CD8-positive, alpha-beta T cell (primary cell): ENCODE measurements at regions of chr5 and their contacts with region 1.

Region 1: GRCh38 chr5:170338933-170339779 is 41.6 kb upstream of the LCP2 start:
- DNase-seq: peak; percentile 39 to 88 (median 69)
- ATAC-seq: peak; percentile 65
- H3K4me3 ChIP-seq: no peak overlapping the region
- H3K4me3 Mint-ChIP-seq: no peak overlapping the region
- H3K27ac ChIP-seq: no peak overlapping the region
- H3K27ac Mint-ChIP-seq: peak overlapping the region; percentile 85
- H3K4me1 ChIP-seq: peaks cover 49% of the 10 kb centered on the region
- H3K4me1 Mint-ChIP-seq: peaks cover 39% of the 10 kb centered on the region
- H3K27me3 ChIP-seq: no peaks in the 10 kb centered on the region
- H3K27me3 Mint-ChIP-seq: no peaks in the 10 kb centered on the region
- CTCF ChIP-seq: peak; percentile 68

Region 2: GRCh38 chr5:169583424-169584204 is 755.5 kb before region 1 on chr5 and contains the start of gene SPDL1:
- CTCF ChIA-PET with region 1: no interaction called
- POLR2A ChIA-PET with region 1: no interaction called
- intact Hi-C with region 1: loop called (anchors 5 to 10 kb)
- DNase-seq: peak; percentile 87 to 97 (median 93)
- ATAC-seq: peak; percentile 93
- H3K4me3 ChIP-seq: peak within 1 kb of the TSS; percentile 76 to 89
- H3K4me3 Mint-ChIP-seq: peak within 1 kb of the TSS; percentile 99
- H3K27ac ChIP-seq: peak within 1 kb of the TSS; percentile 65 to 74
- H3K27ac Mint-ChIP-seq: peak within 1 kb of the TSS; percentile 94
- H3K4me1 ChIP-seq: peaks cover 5% of the 10 kb centered on the region
- H3K4me1 Mint-ChIP-seq: peaks cover 21% of the 10 kb centered on the region
- H3K27me3 ChIP-seq: no peaks in the 10 kb centered on the region
- H3K27me3 Mint-ChIP-seq: no peaks in the 10 kb centered on the region
- CTCF ChIP-seq: no peak
- total RNA-seq, gene SPDL1: 5.2 to 6.9 TPM

Region 3: DNA sequence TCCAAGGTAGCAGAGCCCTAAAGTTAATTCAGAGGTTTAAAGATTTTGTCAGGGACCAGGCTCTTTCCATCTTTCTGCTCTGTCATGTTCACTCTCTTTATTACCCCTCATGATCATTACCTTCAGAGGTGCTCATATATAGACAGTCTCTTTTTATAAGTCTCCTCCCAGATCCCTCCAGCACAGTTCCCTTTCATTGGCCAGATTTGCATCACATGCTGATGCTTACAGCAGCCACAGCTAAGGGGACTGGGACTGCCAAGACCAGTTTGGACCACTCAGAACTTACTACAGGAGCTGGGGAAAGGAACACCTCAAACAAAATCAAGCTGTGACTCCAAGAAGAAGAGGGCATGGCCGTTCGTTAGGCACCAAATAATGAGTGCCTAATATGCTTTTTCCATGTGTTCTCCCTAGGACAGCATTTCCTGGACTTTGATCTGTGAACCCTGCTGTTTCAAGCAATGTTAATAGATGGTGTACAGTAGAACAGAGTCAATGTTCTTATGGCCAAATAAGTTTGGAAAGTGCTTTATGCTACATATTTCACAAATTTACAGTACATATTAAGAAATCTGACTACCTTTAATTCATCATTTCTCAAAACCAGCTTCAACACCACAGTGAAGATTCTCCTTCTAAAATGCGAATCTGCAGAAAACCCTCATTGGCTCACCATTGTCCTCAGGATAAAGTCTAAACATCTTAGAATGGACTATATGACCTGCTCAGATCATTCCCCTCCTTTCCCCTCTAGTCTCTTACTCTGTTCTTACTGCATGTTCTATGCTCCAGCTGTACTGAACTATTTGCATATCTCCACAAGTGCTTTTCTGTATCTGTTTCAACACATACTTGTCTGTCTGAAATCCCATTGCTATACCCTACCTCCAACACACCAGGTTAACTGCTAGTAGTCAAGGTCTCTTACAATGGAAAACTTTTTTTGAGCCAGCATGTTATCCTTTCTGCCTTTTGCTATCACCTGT is 103.0 kb before region 1 on chr5:
- CTCF ChIA-PET with region 1: interaction called, 34 read pairs
- POLR2A ChIA-PET with region 1: no interaction called
- intact Hi-C with region 1: no loop called
- DNase-seq: no peak
- ATAC-seq: no peak
- H3K4me3 ChIP-seq: no peak overlapping the region
- H3K4me3 Mint-ChIP-seq: no peak overlapping the region
- H3K27ac ChIP-seq: no peak overlapping the region
- H3K27ac Mint-ChIP-seq: peak overlapping the region; percentile 76
- H3K4me1 ChIP-seq: no peaks in the 10 kb centered on the region
- H3K4me1 Mint-ChIP-seq: peaks cover 14% of the 10 kb centered on the region
- H3K27me3 ChIP-seq: no peaks in the 10 kb centered on the region
- H3K27me3 Mint-ChIP-seq: no peaks in the 10 kb centered on the region
- CTCF ChIP-seq: no peak

Region 4: DNA sequence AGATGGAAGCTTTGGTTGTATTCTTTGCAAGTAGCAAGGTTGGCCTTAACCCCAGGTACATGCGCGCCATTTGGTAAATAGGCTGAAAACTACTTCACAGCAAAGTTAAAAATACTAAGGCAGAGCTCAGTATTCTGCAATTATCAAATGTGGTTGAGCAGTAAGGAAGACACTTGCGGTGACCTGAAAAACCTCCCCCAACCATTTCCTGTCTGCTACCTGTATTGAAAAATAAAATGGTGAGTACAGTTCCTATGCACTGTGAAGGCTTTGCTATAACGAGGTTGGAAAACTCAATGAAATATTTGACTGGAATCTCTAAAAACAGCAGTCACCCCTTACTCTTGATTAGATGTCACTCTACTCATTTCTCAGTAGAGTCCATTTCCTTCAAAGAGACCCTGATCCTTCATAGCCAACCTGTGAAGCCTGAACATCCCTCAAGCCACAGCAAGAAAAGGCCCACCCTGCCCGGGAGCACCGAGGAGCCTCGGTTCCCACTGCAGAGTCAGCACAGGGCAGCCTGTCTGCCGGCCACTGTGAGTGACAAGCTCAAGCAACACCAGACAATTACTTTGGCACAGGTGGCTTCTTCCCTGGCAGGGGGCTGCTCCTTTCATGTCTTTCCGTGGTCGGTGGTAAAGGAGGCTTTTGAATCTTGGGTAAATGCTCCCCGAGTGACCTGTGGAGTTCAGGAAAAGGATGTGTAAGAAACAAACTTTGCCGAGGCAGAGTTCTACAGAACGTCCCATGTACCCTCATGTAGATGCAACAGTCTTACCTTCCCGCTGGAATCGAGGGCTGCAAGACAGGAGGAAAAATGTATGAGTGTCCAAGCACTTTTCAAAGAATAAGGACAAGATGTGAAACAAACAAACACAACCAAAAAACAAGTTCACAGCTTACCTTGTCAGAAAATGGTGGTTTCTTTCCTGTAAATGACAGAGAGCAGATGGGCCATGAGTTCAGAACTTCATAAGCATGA is 76.8 kb before region 1 on chr5:
- CTCF ChIA-PET with region 1: interaction called, 342 read pairs
- POLR2A ChIA-PET with region 1: interaction called, 16 read pairs
- intact Hi-C with region 1: loop called in 1 of 2 experiments (anchors 1 kb)
- DNase-seq: peak in 6 of 9 experiments; percentile 43 to 87 (median 67)
- ATAC-seq: peak; percentile 77
- H3K4me3 ChIP-seq: peak overlapping the region in 1 of 2 experiments; percentile 11
- H3K4me3 Mint-ChIP-seq: peak overlapping the region; percentile 74
- H3K27ac ChIP-seq: peak overlapping the region; percentile 45 to 62
- H3K27ac Mint-ChIP-seq: peak overlapping the region; percentile 98
- H3K4me1 ChIP-seq: peaks cover 81% of the 10 kb centered on the region
- H3K4me1 Mint-ChIP-seq: peaks cover 96% of the 10 kb centered on the region
- H3K27me3 ChIP-seq: no peaks in the 10 kb centered on the region
- H3K27me3 Mint-ChIP-seq: no peaks in the 10 kb centered on the region
- CTCF ChIP-seq: no peak

Region 5: GRCh38 chr5:170287532-170287931 is 51.6 kb before region 1 on chr5:
- CTCF ChIA-PET with region 1: interaction called, 192 read pairs
- POLR2A ChIA-PET with region 1: interaction called, 112 read pairs
- intact Hi-C with region 1: no loop called
- DNase-seq: peak in 1 of 9 experiments; percentile 48
- ATAC-seq: peak; percentile 3
- H3K4me3 ChIP-seq: no peak overlapping the region
- H3K4me3 Mint-ChIP-seq: peak overlapping the region; percentile 68
- H3K27ac ChIP-seq: peak overlapping the region in 1 of 2 experiments; percentile 86
- H3K27ac Mint-ChIP-seq: peak overlapping the region; percentile 97
- H3K4me1 ChIP-seq: peaks cover 99% of the 10 kb centered on the region
- H3K4me1 Mint-ChIP-seq: peaks cover 100% of the 10 kb centered on the region
- H3K27me3 ChIP-seq: no peaks in the 10 kb centered on the region
- H3K27me3 Mint-ChIP-seq: no peaks in the 10 kb centered on the region
- CTCF ChIP-seq: no peak

Region 6: GRCh38 chr5:170327168-170327567 is 12.0 kb before region 1 on chr5:
- CTCF ChIA-PET with region 1: interaction called, 25 read pairs
- POLR2A ChIA-PET with region 1: interaction called, 3 read pairs
- intact Hi-C with region 1: no loop called
- DNase-seq: peak in 1 of 9 experiments; percentile 35
- ATAC-seq: no peak
- H3K4me3 ChIP-seq: no peak overlapping the region
- H3K4me3 Mint-ChIP-seq: no peak overlapping the region
- H3K27ac ChIP-seq: peak overlapping the region in 1 of 2 experiments; percentile 36
- H3K27ac Mint-ChIP-seq: no peak overlapping the region
- H3K4me1 ChIP-seq: peaks cover 52% of the 10 kb centered on the region
- H3K4me1 Mint-ChIP-seq: peaks cover 12% of the 10 kb centered on the region
- H3K27me3 ChIP-seq: no peaks in the 10 kb centered on the region
- H3K27me3 Mint-ChIP-seq: no peaks in the 10 kb centered on the region
- CTCF ChIP-seq: no peak

Region 7: GRCh38 chr5:170444969-170445505 is 105.9 kb after region 1 on chr5:
- CTCF ChIA-PET with region 1: no interaction called
- POLR2A ChIA-PET with region 1: no interaction called
- intact Hi-C with region 1: no loop called
- DNase-seq: peak in 1 of 9 experiments; percentile 27
- ATAC-seq: no peak
- H3K4me3 ChIP-seq: no peak overlapping the region
- H3K4me3 Mint-ChIP-seq: no peak overlapping the region
- H3K27ac ChIP-seq: no peak overlapping the region
- H3K27ac Mint-ChIP-seq: no peak overlapping the region
- H3K4me1 ChIP-seq: no peaks in the 10 kb centered on the region
- H3K4me1 Mint-ChIP-seq: peaks cover 3% of the 10 kb centered on the region
- H3K27me3 ChIP-seq: no peaks in the 10 kb centered on the region
- H3K27me3 Mint-ChIP-seq: no peaks in the 10 kb centered on the region
- CTCF ChIP-seq: no peak

Region 8: DNA sequence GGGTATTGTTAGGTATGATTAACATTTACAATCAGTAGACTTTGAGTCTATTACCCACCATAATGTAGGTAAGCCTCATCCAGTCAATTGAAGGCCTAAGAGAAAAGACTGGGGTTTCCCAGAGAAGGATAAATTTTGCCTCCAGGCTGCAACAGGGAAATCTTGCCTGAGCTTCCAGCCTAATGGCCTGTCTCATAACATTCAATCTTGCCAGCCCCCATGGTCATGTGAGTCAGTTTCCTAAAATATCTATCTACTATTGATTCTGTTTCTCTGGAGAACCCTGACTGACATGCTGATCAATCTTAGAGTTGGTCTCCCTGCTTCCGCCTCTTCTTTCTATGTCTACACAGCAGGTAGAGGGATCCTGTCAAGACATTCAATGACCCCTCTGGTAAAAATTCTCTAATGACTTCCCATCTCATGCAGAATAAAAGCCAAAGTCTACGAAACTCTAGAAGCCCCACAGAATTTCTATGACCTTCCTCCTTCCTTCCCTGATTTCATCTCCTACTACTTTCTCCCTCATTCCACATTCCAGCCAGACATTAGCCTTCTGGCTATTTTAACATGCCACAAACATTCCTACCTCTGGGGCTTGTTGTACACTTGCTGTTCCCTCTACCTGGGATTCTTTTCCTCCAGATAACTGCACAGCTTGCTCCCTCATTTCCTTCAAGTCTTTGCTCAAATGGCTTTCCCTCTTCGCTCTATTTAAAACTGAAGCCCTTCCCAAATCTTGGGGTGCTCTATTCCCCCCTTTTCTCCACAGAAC is 1607.0 kb after region 1 on chr5:
- CTCF ChIA-PET with region 1: no interaction called
- POLR2A ChIA-PET with region 1: no interaction called
- intact Hi-C with region 1: no loop called
- DNase-seq: no peak
- ATAC-seq: no peak
- H3K4me3 ChIP-seq: no peak overlapping the region
- H3K4me3 Mint-ChIP-seq: no peak overlapping the region
- H3K27ac ChIP-seq: no peak overlapping the region
- H3K27ac Mint-ChIP-seq: peak overlapping the region; percentile 9
- H3K4me1 ChIP-seq: no peaks in the 10 kb centered on the region
- H3K4me1 Mint-ChIP-seq: peaks cover 52% of the 10 kb centered on the region
- H3K27me3 ChIP-seq: no peaks in the 10 kb centered on the region
- H3K27me3 Mint-ChIP-seq: no peaks in the 10 kb centered on the region
- CTCF ChIP-seq: no peak